ENCODE measurements at regions of chr19 and their contacts with region 1.

Region 1: DNA sequence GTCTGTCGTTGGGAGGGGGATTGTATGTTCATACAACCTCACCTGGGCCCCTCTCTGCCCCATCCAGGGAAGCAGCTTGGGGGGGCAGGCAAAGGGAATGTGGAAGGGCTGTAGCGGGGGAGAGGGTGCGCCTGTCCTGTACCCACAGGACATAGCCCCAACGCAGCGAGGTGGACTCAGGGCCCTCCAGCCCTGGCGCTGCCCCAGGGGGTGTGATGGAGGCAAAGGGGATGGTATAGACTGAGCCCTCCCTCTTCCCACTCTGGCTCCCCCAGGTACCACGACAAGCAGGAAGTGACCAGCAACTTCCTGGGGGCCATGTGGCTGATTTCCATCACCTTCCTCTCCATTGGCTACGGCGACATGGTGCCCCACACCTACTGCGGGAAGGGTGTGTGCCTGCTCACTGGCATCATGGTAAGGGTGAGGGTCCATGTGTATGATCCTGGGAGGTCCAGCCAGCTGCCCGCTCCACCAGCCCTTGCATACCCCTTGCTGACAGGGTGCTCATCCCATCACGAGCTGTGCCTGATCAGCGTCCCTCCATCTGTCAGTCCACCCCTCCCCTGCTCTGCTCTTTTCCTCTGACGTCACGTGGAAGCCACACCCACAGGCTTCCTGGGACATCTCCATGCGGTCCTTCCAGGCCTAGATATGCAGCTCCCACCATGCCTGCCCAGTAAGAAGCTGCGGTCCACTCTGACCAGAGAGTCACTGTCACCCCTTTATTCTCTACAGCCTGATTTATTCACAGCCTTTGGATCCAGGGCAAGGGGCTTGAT is 18.3 kb downstream of the KCNN1 start:
- DNase-seq: no peak
- ATAC-seq: no peak

Region 2: GRCh38 chr19:17902701-17903100 is 82.5 kb before region 1 on chr19:
- intact Hi-C with region 1: no loop called
- DNase-seq: no peak
- ATAC-seq: no peak

Region 3: DNA sequence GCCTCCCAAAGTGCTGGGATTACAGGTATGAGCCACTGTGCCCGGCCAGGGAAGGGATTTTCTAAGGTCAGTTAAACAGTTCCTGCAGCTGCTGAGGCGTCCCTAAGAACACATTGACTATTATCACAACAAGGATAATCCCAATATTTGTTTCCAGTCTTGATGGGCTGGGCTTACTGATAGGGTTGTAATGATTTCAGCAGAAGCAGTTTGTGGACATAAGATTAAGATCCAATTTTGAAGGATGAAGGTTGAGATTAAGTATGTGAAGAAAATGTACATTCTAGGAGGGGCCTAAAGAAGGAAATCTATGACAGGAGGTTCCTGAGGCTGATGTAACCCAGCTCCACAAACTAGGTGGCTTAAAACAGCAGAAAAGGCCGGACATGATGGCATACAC is 63.1 kb before region 1 on chr19:
- intact Hi-C with region 1: loop called in 1 of 2 experiments (anchors 5 kb)
- DNase-seq: no peak
- ATAC-seq: no peak

Measured in left cardiac atrium (tissue), 4 donors.